Vagina (tissue), 2 donors: ENCODE measurements at regions of chr3 and their contacts with region 1.

Region 1: GRCh38 chr3:179788996-179789395 is 136.2 kb downstream of the USP13 start:
- DNase-seq: no peak
- H3K4me3 ChIP-seq: no peak overlapping the region
- H3K27ac ChIP-seq: no peak overlapping the region
- H3K4me1 ChIP-seq: no peaks in the 10 kb centered on the region
- H3K27me3 ChIP-seq: no peaks in the 10 kb centered on the region
- CTCF ChIP-seq: no peak
- POLR2A ChIP-seq: no peak

Region 2: DNA sequence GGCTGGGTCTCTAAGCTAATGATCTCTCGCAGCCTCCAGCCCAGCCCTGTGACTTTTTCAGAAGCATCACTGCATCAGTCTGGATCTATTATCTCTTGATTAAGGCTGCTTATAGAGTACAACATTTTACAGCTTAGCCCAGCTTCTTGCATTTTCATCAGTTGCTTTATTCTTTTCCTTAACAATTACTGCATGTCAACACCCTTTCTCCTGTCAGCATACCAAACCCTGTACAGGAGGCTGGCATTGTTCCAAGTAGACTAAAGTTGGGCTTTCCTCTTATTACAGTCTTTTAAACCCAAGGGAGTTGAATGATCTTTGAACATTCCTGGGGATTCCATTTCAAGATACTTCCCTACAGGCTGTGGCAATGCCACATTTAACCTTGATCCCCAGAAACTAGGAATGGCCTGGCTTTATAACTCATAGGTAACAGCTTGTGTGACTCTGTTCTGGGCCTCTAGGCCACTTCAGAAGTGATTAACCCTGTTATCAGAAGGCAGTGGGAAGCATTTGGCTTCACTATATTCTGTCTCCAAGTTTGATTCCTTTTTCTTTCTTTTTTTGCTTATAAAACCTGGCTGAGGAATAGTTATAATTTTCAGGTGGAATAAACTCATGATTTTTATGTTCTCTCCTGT is 1069.9 kb before region 1 on chr3:
- intact Hi-C with region 1: loop called (anchors 5 kb)
- DNase-seq: no peak
- H3K4me3 ChIP-seq: no peak overlapping the region
- H3K27ac ChIP-seq: no peak overlapping the region
- H3K4me1 ChIP-seq: no peaks in the 10 kb centered on the region
- H3K27me3 ChIP-seq: no peaks in the 10 kb centered on the region
- CTCF ChIP-seq: no peak
- POLR2A ChIP-seq: no peak

Region 3: DNA sequence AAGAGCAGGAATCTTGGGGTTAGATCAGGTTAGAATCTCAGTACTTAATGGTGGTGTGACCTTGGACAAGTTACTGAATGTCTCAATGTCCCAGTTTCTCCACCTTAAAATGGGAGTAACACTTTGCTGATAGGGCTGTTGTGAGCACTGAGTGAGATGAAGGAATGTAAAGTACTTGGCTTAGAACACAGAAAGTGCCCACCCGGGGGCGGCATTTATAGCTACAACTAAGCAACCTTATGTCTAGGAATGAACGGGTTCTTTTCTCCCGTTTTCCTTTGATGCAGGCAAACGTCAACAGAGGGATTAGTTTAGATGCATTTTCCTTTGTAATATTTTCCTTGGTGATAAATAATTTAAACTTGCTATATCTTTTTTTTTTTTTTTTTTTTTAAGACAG is 40.4 kb after region 1 on chr3:
- intact Hi-C with region 1: no loop called
- DNase-seq: no peak
- H3K4me3 ChIP-seq: no peak overlapping the region
- H3K27ac ChIP-seq: no peak overlapping the region
- H3K4me1 ChIP-seq: no peaks in the 10 kb centered on the region
- H3K27me3 ChIP-seq: no peaks in the 10 kb centered on the region
- CTCF ChIP-seq: no peak
- POLR2A ChIP-seq: no peak

Region 4: DNA sequence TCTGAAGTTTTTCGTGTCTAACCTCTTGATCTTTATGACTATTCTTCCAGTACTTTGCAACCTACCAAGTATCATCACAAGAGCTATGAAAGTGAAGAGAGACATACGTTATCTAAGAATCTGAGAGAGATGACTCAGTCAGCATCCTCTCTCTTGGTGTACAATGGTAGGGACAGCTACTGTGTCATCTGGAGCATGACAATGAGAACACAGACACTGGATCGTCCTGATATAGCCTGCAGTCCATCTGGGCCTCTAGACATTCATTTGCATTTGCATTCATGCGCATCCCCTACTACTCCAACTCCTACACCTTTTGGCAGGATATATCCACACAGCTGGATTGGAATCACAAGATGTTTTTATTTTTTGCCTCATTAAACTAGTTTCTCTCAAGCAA is 132.5 kb after region 1 on chr3:
- intact Hi-C with region 1: no loop called
- DNase-seq: no peak
- H3K4me3 ChIP-seq: no peak overlapping the region
- H3K27ac ChIP-seq: no peak overlapping the region
- H3K4me1 ChIP-seq: no peaks in the 10 kb centered on the region
- H3K27me3 ChIP-seq: no peaks in the 10 kb centered on the region
- CTCF ChIP-seq: no peak
- POLR2A ChIP-seq: no peak